B cell (primary cell): ENCODE measurements at regions of chr1 and their contacts with region 1.

Region 1: GRCh38 chr1:45750298-45751038 is at the start of gene IPP:
- DNase-seq: peak; percentile 96
- ATAC-seq: peak; percentile 94
- H3K4me3 ChIP-seq: peak within 1 kb of the TSS; percentile 70 to 82 (median 75)
- H3K4me3 Mint-ChIP-seq: peak within 1 kb of the TSS; percentile 99
- H3K27ac ChIP-seq: peak within 1 kb of the TSS; percentile 94 to 98
- H3K27ac Mint-ChIP-seq: peak within 1 kb of the TSS; percentile 100
- H3K4me1 ChIP-seq: peaks cover 8 to 18% of the 10 kb centered on the region in 2 donors
- H3K4me1 Mint-ChIP-seq: peaks cover 15% of the 10 kb centered on the region
- H3K27me3 ChIP-seq: no peaks in the 10 kb centered on the region
- H3K27me3 Mint-ChIP-seq: no peaks in the 10 kb centered on the region
- CTCF ChIP-seq: no peak
- total RNA-seq, gene IPP: 12.1 and 12.7 TPM in 2 replicates

Region 2: DNA sequence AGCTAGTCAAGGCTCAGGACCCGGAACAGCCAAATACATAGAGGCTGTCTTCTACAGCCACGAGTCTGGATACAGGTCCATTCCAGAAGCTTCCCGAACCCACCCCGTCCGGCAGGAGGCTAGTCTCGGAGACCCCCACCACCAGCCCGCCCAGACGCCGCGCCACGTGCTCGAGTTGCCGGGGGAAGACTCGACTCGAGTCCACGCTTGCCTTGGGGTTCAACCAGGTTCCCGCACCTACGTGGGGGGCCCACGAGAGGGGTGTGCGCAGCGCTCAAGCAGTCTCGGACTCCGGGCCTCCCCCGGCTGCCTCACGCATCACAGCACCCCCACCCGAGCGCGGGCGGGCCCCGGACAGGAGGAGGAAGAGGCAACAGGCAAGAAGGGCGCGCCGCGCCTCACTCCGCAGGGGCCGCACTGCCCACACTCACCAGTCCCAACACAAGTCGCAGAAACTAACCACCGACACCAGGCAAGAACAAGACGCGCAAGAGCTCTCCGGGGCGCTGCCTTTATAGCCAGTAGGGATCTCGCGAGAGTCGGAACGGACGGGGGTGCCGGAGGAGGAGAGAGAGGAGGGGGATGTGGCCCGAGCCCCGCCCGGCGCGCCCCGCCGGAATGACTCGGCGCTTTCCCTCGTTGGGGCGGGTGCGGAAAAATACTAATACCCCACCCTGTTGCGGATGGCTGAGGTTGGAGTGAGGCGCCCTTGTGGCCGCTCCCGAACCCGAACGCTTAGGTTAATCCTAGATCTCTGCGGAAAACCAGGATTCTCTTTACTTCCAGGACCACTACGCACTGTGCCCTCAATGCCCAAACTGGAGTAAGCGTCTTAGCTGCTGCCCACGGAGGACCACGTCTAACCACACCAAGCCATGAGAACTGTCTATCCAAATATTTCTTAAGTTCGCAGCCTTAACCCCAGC is 228.8 kb before region 1 on chr1 and contains the start of gene PRDX1:
- CTCF ChIA-PET with region 1: no interaction called
- POLR2A ChIA-PET with region 1: no interaction called
- intact Hi-C with region 1: loop called (anchors 10 kb)
- DNase-seq: peak; percentile 98
- ATAC-seq: peak; percentile 86
- H3K4me3 ChIP-seq: peak within 1 kb of the TSS; percentile 75 to 97 (median 82)
- H3K4me3 Mint-ChIP-seq: peak within 1 kb of the TSS; percentile 95
- H3K27ac ChIP-seq: peak within 1 kb of the TSS; percentile 80 to 82
- H3K27ac Mint-ChIP-seq: peak within 1 kb of the TSS; percentile 98
- H3K4me1 ChIP-seq: peaks cover 16 to 31% of the 10 kb centered on the region in 2 donors
- H3K4me1 Mint-ChIP-seq: peaks cover 34% of the 10 kb centered on the region
- H3K27me3 ChIP-seq: no peaks in the 10 kb centered on the region
- H3K27me3 Mint-ChIP-seq: no peaks in the 10 kb centered on the region
- CTCF ChIP-seq: no peak
- total RNA-seq, gene PRDX1: 96.5 and 104 TPM in 2 replicates

Region 3: DNA sequence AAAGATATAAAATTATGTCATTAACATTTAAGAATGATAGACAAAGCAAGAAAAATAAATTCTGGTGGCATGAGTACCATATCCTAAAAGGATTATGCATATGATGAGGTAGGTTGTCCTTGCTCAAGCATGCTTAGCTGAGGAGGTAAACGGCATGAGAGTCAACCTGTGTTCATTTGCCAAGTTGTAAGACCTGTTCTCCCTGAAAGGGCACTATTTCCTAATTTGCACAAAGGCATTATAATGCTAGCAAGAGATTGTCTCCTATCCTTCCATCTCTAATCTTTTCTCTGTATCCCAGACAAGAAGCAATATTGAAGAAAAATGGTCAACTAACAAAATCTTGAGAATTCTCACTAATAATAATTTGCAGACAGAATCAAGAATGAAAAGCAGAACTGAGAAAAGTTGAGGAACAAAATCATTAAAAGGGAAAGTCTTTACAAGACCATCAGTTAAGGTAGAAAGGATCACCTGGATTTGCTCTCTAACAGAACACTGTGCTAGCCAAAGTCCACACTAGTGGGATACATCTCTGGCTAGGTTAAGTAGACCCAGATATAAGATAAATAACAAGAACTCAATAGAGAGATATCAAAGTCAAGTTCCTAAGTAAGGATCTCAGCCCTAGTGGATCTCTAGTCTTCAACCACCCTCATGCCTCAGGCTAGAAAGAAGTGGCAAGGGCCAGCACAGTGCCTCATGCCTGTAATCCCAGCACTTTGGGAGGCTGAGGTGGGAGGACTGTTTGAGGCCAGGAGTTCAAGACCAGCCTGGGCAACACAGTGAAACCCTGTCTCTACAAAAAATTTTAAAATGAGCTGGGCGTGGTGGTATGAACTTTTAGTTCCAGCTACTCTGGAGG is 19.8 kb before region 1 on chr1:
- CTCF ChIA-PET with region 1: interaction called, 3 read pairs
- POLR2A ChIA-PET with region 1: no interaction called
- intact Hi-C with region 1: loop called (anchors 2 kb)
- DNase-seq: no peak
- ATAC-seq: no peak
- H3K4me3 ChIP-seq: no peak overlapping the region
- H3K4me3 Mint-ChIP-seq: no peak overlapping the region
- H3K27ac ChIP-seq: no peak overlapping the region
- H3K27ac Mint-ChIP-seq: no peak overlapping the region
- H3K4me1 ChIP-seq: peaks cover 2 to 3% of the 10 kb centered on the region in 2 donors
- H3K4me1 Mint-ChIP-seq: peaks cover 11% of the 10 kb centered on the region
- H3K27me3 ChIP-seq: no peaks in the 10 kb centered on the region
- H3K27me3 Mint-ChIP-seq: no peaks in the 10 kb centered on the region
- CTCF ChIP-seq: no peak

Region 4: DNA sequence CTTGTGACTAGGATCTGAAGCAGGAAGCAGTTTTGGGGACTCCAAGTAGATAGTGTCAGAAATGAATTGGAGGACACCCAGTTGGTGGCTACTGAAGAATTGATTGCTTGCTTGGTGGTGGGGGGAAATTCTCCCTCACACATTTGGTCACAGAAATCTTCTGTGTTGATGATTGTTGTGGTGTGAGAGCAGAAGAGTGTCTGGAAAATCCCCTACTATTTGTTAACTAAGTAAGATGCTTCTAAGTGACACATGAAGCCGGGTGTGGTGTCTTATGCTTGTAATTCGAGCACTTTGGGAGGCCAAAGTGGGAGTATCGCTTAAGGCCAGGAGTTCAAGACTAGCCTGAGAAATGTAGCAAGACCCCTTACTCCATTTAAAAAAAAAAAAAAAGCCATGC is 22.5 kb after region 1 on chr1:
- CTCF ChIA-PET with region 1: no interaction called
- POLR2A ChIA-PET with region 1: no interaction called
- intact Hi-C with region 1: no loop called
- DNase-seq: no peak
- ATAC-seq: no peak
- H3K4me3 ChIP-seq: no peak overlapping the region
- H3K4me3 Mint-ChIP-seq: no peak overlapping the region
- H3K27ac ChIP-seq: no peak overlapping the region
- H3K27ac Mint-ChIP-seq: no peak overlapping the region
- H3K4me1 ChIP-seq: no peaks in the 10 kb centered on the region
- H3K4me1 Mint-ChIP-seq: no peaks in the 10 kb centered on the region
- H3K27me3 ChIP-seq: no peaks in the 10 kb centered on the region
- H3K27me3 Mint-ChIP-seq: no peaks in the 10 kb centered on the region
- CTCF ChIP-seq: no peak

Region 5: GRCh38 chr1:45803301-45803780 is 52.9 kb after region 1 on chr1 and contains the start of gene MAST2:
- CTCF ChIA-PET with region 1: interaction called, 3 read pairs
- POLR2A ChIA-PET with region 1: no interaction called
- intact Hi-C with region 1: loop called (anchors 1 kb)
- DNase-seq: peak; percentile 92
- ATAC-seq: peak; percentile 97
- H3K4me3 ChIP-seq: peak within 1 kb of the TSS; percentile 31 to 64 (median 52)
- H3K4me3 Mint-ChIP-seq: peak within 1 kb of the TSS; percentile 98
- H3K27ac ChIP-seq: no peak within 1 kb of the TSS
- H3K27ac Mint-ChIP-seq: peak within 1 kb of the TSS; percentile 71
- H3K4me1 ChIP-seq: peaks cover 11 to 15% of the 10 kb centered on the region in 2 donors
- H3K4me1 Mint-ChIP-seq: peaks cover 27% of the 10 kb centered on the region
- H3K27me3 ChIP-seq: no peaks in the 10 kb centered on the region
- H3K27me3 Mint-ChIP-seq: no peaks in the 10 kb centered on the region
- CTCF ChIP-seq: no peak
- total RNA-seq, gene MAST2: 23.3 and 26.4 TPM in 2 replicates